CD8-positive, alpha-beta T cell (primary cell): ENCODE measurements at regions of chr11 and their contacts with region 1.

Region 1: GRCh38 chr11:102415304-102415916 is 37.2 kb downstream of the TMEM123 start:
- DNase-seq: peak in 1 of 9 experiments; percentile 49
- ATAC-seq: peak; percentile 50
- H3K4me3 ChIP-seq: peak overlapping the region in 1 of 2 experiments; percentile 8
- H3K4me3 Mint-ChIP-seq: peak overlapping the region; percentile 70
- H3K27ac ChIP-seq: peak overlapping the region in 1 of 2 experiments; percentile 47
- H3K27ac Mint-ChIP-seq: peak overlapping the region; percentile 83
- H3K4me1 ChIP-seq: peaks cover 85% of the 10 kb centered on the region
- H3K4me1 Mint-ChIP-seq: peaks cover 95% of the 10 kb centered on the region
- H3K27me3 ChIP-seq: no peaks in the 10 kb centered on the region
- H3K27me3 Mint-ChIP-seq: no peaks in the 10 kb centered on the region
- CTCF ChIP-seq: no peak

Region 2: DNA sequence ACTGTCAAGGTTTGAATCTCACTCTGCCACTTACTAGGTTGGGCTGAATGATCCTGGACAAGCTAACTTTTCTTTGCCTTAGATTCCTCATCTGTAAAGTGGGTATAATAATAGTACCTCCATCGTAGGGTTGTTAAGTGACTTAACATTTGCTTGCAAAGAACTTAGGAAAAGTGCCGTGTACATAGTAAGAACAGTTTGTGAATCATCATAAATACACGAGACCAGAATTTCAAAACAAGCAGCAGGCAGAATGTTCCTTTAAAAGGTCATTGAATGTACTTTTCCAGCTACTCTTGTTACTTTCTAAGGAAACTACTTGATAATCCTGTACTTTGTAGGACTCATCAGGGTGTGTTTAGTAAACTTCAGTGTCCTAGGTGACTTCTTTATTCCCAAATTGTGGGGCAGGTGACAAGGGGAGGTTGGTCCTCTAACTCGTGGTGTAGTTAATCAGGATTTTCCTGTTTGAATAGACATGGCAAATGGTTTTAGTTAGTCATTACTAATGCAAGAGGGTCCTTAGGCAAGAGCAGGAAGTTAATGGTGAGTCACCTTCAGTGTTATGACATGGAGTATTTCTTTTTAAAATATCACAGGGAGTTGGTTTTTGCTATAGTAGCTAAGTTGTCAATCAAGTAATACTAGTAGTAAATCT is 237.3 kb before region 1 on chr11:
- CTCF ChIA-PET with region 1: no interaction called
- POLR2A ChIA-PET with region 1: no interaction called
- intact Hi-C with region 1: no loop called
- DNase-seq: no peak
- ATAC-seq: no peak
- H3K4me3 ChIP-seq: no peak overlapping the region
- H3K4me3 Mint-ChIP-seq: no peak overlapping the region
- H3K27ac ChIP-seq: no peak overlapping the region
- H3K27ac Mint-ChIP-seq: no peak overlapping the region
- H3K4me1 ChIP-seq: no peaks in the 10 kb centered on the region
- H3K4me1 Mint-ChIP-seq: no peaks in the 10 kb centered on the region
- H3K27me3 ChIP-seq: no peaks in the 10 kb centered on the region
- H3K27me3 Mint-ChIP-seq: peaks cover 9% of the 10 kb centered on the region
- CTCF ChIP-seq: no peak

Region 3: DNA sequence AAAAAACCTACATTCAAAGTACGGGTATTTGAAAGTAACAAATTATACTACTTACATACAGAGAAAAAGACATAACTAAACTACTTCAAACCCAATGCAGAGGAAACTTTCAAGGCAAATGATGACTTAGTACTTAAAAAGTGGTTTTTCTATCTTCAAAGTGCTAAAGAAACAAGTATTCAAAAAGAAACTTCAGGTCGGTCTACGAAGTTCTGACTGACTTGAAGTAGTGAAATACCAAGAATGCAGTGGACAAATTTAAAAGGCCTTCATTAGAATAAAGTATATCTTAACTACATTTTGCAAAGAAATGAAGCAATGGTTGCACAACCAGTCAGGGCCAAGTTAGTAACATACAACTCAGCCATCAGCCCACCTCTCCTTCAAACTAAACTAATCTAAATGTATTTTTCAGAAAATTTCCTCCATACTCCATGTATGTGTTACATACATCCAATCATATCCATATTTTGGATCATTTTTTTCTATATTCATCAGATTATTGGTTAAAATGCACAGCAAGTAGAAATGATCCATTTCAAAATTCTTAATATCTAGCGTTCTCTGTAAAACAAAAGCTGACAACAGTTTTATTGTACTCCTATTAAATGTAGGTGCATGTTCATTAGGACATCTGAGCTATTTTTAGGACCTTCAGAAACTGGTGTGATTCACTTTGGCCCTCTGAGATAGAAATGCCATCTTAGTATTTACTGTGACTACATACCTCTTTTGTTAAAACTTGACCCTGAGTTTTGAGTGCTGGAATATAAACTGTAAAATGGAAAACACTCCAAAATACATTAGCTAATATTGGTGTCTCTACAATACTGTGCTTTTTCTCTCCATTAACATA is 18.5 kb before region 1 on chr11:
- CTCF ChIA-PET with region 1: interaction called, 4 read pairs
- POLR2A ChIA-PET with region 1: interaction called, 11 read pairs
- intact Hi-C with region 1: no loop called
- DNase-seq: no peak
- ATAC-seq: no peak
- H3K4me3 ChIP-seq: no peak overlapping the region
- H3K4me3 Mint-ChIP-seq: peak overlapping the region; percentile 27
- H3K27ac ChIP-seq: no peak overlapping the region
- H3K27ac Mint-ChIP-seq: peak overlapping the region; percentile 83
- H3K4me1 ChIP-seq: peaks cover 28% of the 10 kb centered on the region
- H3K4me1 Mint-ChIP-seq: peaks cover 58% of the 10 kb centered on the region
- H3K27me3 ChIP-seq: no peaks in the 10 kb centered on the region
- H3K27me3 Mint-ChIP-seq: no peaks in the 10 kb centered on the region
- CTCF ChIP-seq: no peak

Region 4: DNA sequence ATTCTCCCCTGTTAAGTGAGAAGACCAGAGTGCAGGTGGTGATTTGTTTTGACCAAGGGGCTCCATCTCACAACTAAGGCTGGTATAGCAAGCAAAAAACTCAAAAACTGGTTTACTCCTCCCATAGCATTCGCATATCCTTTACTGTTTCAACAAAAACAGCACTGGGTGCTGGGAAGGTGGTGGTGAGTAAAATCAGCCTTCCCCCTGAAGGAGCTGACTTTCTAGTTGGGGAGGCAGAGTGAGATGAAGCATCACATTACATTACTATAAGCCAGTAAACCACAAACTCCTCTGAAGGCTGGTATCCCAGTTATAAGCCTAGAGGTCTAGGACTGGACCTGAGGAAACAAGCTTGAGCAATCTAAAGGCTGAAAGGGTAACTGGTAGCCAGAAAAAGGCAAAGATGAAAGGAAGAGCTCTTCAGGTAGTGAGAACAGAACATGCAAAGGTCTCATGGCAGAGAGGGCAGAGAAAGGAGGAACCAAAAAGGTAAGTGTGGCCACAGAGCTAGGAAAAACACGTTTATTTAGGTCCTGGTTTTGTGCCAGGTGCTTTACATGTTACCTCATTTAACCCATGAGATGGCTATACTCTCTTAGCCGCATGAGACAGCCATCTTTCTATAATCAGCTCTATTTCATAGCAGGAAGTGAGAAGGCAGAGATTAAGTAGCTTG is 14.9 kb after region 1 on chr11:
- CTCF ChIA-PET with region 1: interaction called, 3 read pairs
- POLR2A ChIA-PET with region 1: no interaction called
- intact Hi-C with region 1: loop called in 1 of 2 experiments (anchors 2 kb)
- DNase-seq: peak in 1 of 9 experiments; percentile 61
- ATAC-seq: peak; percentile 47
- H3K4me3 ChIP-seq: no peak overlapping the region
- H3K4me3 Mint-ChIP-seq: peak overlapping the region; percentile 2
- H3K27ac ChIP-seq: peak overlapping the region in 1 of 2 experiments; percentile 34
- H3K27ac Mint-ChIP-seq: peak overlapping the region; percentile 81
- H3K4me1 ChIP-seq: peaks cover 50% of the 10 kb centered on the region
- H3K4me1 Mint-ChIP-seq: peaks cover 71% of the 10 kb centered on the region
- H3K27me3 ChIP-seq: no peaks in the 10 kb centered on the region
- H3K27me3 Mint-ChIP-seq: no peaks in the 10 kb centered on the region
- CTCF ChIP-seq: no peak